ENCODE measurements at regions of chr5 and their contacts with region 1.

Region 1: DNA sequence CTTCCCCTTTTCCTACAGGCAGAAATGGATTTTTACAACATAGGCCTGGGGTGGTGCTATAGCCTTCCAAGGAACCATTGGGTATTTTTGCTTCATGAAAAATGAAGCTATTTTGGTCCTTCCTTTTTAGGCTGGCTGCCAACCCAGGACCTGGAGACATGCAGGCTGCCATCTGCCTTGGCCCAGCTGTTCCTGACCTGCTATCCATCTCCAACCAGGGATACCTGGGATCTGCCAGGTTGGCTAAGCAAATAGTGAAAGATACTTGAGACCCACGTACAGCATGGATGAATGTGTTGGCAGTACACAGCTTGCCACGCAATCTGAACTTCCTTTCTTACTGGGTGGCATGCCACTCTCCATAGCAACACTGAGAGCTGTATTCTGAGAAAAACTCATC is 31.1 kb downstream of the MRPS27 start:
- DNase-seq: no peak
- H3K4me3 ChIP-seq: no peak overlapping the region
- H3K27ac ChIP-seq: no peak overlapping the region
- H3K4me1 ChIP-seq: no peaks in the 10 kb centered on the region
- H3K27me3 ChIP-seq: no peaks in the 10 kb centered on the region
- CTCF ChIP-seq: no peak

Region 2: DNA sequence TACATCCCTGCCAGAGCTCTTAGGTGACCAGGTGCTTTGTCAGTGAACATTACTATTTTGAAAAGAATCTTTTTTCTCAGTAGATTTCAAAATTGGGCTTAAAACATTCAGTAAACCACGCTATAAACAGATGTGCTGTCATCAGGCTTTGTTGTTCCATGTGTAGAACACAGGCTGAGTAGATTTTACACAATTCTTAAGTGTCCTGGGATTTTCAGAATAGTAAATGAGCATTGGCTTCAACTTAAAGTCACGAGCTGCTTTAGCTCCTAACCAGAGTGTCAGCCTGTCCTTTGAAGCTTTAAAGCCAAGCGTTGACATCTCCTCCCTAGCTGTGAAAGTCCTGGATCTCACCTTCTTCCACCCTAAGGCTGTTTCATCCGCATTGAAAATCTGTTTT is 486.3 kb before region 1 on chr5:
- CTCF ChIA-PET with region 1: no interaction called
- POLR2A ChIA-PET with region 1: no interaction called
- intact Hi-C with region 1: no loop called
- DNase-seq: no peak
- H3K4me3 ChIP-seq: no peak overlapping the region
- H3K27ac ChIP-seq: no peak overlapping the region
- H3K4me1 ChIP-seq: no peaks in the 10 kb centered on the region
- H3K27me3 ChIP-seq: no peaks in the 10 kb centered on the region
- CTCF ChIP-seq: no peak

Region 3: GRCh38 chr5:71903808-71904207 is 385.1 kb before region 1 on chr5:
- CTCF ChIA-PET with region 1: no interaction called
- POLR2A ChIA-PET with region 1: interaction called, 13 read pairs
- intact Hi-C with region 1: no loop called
- DNase-seq: no peak
- H3K4me3 ChIP-seq: no peak overlapping the region
- H3K27ac ChIP-seq: no peak overlapping the region
- H3K4me1 ChIP-seq: peaks cover 5% of the 10 kb centered on the region; the same call in 1 of the 2 replicates
- H3K27me3 ChIP-seq: no peaks in the 10 kb centered on the region
- CTCF ChIP-seq: no peak

Measured in PC-9 (cell line).